ENCODE measurements at regions of chr9 and their contacts with region 1.

Region 1: GRCh38 chr9:128081056-128081455 is 13.0 kb downstream of the SLC25A25 start:
- DNase-seq: peak in 1 of 2 donors; percentile 68
- ATAC-seq: peak in 1 of 2 donors; percentile 57
- H3K4me3 ChIP-seq: no peak overlapping the region
- H3K27ac ChIP-seq: peak overlapping the region; percentile 64 to 83 (median 66)
- H3K4me1 ChIP-seq: peaks cover 27 to 41% of the 10 kb centered on the region in 2 donors
- H3K27me3 ChIP-seq: no peaks in the 10 kb centered on the region
- CTCF ChIP-seq: no peak
- POLR2A ChIP-seq: no peak

Region 2: GRCh38 chr9:126813072-126813471 is 1268.0 kb before region 1 on chr9:
- in situ Hi-C with region 1: no loop called
- intact Hi-C with region 1: loop called (anchors 5 kb)
- DNase-seq: peak; percentile 68 to 71
- ATAC-seq: peak; percentile 60 to 73
- H3K4me3 ChIP-seq: no peak overlapping the region
- H3K27ac ChIP-seq: peak overlapping the region; percentile 88 to 100 (median 98)
- H3K4me1 ChIP-seq: peaks cover 45 to 74% of the 10 kb centered on the region in 2 donors
- H3K27me3 ChIP-seq: no peaks in the 10 kb centered on the region
- CTCF ChIP-seq: no peak
- POLR2A ChIP-seq: peak; percentile 42 to 62